ENCODE measurements at regions of chr4 and their contacts with region 1.

Region 1: GRCh38 chr4:98995183-98996055 is at the start of gene METAP1:
- DNase-seq: peak; percentile 93
- ATAC-seq: peak; percentile 91
- H3K4me3 ChIP-seq: peak within 1 kb of the TSS; percentile 86 to 98 (median 90)
- H3K27ac ChIP-seq: peak within 1 kb of the TSS; percentile 88
- H3K4me1 ChIP-seq: peaks cover 35% of the 10 kb centered on the region
- H3K27me3 ChIP-seq: no peaks in the 10 kb centered on the region; a peak in 1 of 5 replicates
- CTCF ChIP-seq: peak; percentile 93
- EP300 ChIP-seq: peak in 1 of 2 experiments; percentile 34; a peak in 1 of 4 replicates
- POLR2A ChIP-seq: peak; percentile 77 to 94
- RAD21 ChIP-seq: peak; percentile 90
- total RNA-seq, gene METAP1: 44.9 and 64.9 TPM in 2 replicates

Region 2: GRCh38 chr4:99013402-99013843 is 18.0 kb after region 1 on chr4:
- CTCF ChIA-PET with region 1: no interaction called
- POLR2A ChIA-PET with region 1: interaction called, 4 read pairs
- in situ Hi-C with region 1: no loop called
- intact Hi-C with region 1: loop called (anchors 1 kb)
- DNase-seq: peak; percentile 57
- ATAC-seq: peak; percentile 95
- H3K4me3 ChIP-seq: no peak overlapping the region
- H3K27ac ChIP-seq: peak overlapping the region; percentile 64
- H3K4me1 ChIP-seq: peaks cover 20% of the 10 kb centered on the region
- H3K27me3 ChIP-seq: no peaks in the 10 kb centered on the region
- CTCF ChIP-seq: no peak
- EP300 ChIP-seq: no peak
- POLR2A ChIP-seq: peak in 1 of 2 experiments; percentile 69; a peak in 1 of 4 replicates
- RAD21 ChIP-seq: no peak

Region 3: DNA sequence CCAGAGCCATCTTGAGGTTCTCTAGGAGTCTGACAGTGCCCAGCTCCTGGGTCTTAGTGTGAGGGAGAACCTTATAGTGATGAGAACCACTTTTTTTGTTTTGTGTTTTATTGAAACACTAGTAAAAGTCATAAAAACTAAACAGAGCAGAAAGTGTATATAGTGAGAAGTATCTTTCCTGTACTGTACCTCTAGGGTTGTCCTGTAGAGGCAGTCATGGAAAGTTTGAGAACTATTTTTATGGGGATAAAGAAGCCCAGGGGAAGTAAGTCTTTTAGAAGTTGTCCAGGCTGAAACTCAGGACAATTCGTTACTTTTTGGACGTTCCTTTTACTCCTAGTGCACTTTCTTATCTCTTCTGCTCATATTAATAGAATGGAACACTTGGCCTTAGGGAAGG is 52.3 kb after region 1 on chr4:
- CTCF ChIA-PET with region 1: no interaction called
- POLR2A ChIA-PET with region 1: interaction called, 4 read pairs
- in situ Hi-C with region 1: loop called (anchors 5 kb)
- intact Hi-C with region 1: no loop called
- DNase-seq: no peak
- ATAC-seq: peak; percentile 80
- H3K4me3 ChIP-seq: no peak overlapping the region
- H3K27ac ChIP-seq: no peak overlapping the region
- H3K4me1 ChIP-seq: peaks cover 14% of the 10 kb centered on the region; the same call in 1 of the 2 replicates
- H3K27me3 ChIP-seq: no peaks in the 10 kb centered on the region
- CTCF ChIP-seq: no peak
- EP300 ChIP-seq: no peak
- POLR2A ChIP-seq: no peak
- RAD21 ChIP-seq: no peak

Region 4: GRCh38 chr4:99088481-99089365 is 93.3 kb after region 1 on chr4 and contains the start of gene ADH5:
- CTCF ChIA-PET with region 1: no interaction called
- POLR2A ChIA-PET with region 1: interaction called, 17 read pairs
- in situ Hi-C with region 1: no loop called
- intact Hi-C with region 1: no loop called
- DNase-seq: peak; percentile 78
- ATAC-seq: peak; percentile 94
- H3K4me3 ChIP-seq: peak within 1 kb of the TSS; percentile 68 to 93 (median 89)
- H3K27ac ChIP-seq: peak within 1 kb of the TSS; percentile 85
- H3K4me1 ChIP-seq: peaks cover 47% of the 10 kb centered on the region
- H3K27me3 ChIP-seq: no peaks in the 10 kb centered on the region; a peak in 1 of 5 replicates
- CTCF ChIP-seq: no peak
- EP300 ChIP-seq: no peak
- POLR2A ChIP-seq: peak; percentile 93 to 97
- RAD21 ChIP-seq: 0 out of 2 replicates have a peak, but pooled peaks have one; percentile 8
- total RNA-seq, gene ADH5: 512 and 855 TPM in 2 replicates

Region 5: DNA sequence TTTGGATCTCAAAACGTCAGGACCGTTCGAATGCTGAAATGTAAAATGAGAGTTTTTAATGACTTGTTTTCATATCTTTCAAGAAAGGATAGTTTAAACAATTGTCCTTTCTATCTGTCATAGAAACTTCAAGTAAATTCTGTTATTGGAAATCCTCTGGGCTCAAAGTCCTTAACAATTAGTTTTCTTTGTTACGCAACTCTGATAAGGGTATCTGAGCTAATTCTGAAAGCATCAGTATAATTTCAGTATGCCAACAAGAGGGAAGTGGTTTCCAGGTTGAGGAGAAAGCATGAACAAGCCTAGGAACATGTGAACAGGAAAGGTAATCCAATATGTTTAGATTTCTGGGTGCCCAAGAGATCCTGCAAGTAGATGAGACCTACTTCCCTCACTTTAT is 417.7 kb after region 1 on chr4:
- CTCF ChIA-PET with region 1: no interaction called
- POLR2A ChIA-PET with region 1: no interaction called
- in situ Hi-C with region 1: no loop called
- intact Hi-C with region 1: loop called (anchors 2 kb)
- DNase-seq: no peak
- ATAC-seq: no peak
- H3K4me3 ChIP-seq: no peak overlapping the region
- H3K27ac ChIP-seq: no peak overlapping the region
- H3K4me1 ChIP-seq: peaks cover 16% of the 10 kb centered on the region; the same call in 1 of the 2 replicates
- H3K27me3 ChIP-seq: no peaks in the 10 kb centered on the region; a peak in 1 of 5 replicates
- CTCF ChIP-seq: no peak
- EP300 ChIP-seq: no peak
- POLR2A ChIP-seq: no peak
- RAD21 ChIP-seq: no peak